CD4-positive, alpha-beta T cell (primary cell): ENCODE measurements at regions of chr12 and their contacts with region 1.

Region 1: DNA sequence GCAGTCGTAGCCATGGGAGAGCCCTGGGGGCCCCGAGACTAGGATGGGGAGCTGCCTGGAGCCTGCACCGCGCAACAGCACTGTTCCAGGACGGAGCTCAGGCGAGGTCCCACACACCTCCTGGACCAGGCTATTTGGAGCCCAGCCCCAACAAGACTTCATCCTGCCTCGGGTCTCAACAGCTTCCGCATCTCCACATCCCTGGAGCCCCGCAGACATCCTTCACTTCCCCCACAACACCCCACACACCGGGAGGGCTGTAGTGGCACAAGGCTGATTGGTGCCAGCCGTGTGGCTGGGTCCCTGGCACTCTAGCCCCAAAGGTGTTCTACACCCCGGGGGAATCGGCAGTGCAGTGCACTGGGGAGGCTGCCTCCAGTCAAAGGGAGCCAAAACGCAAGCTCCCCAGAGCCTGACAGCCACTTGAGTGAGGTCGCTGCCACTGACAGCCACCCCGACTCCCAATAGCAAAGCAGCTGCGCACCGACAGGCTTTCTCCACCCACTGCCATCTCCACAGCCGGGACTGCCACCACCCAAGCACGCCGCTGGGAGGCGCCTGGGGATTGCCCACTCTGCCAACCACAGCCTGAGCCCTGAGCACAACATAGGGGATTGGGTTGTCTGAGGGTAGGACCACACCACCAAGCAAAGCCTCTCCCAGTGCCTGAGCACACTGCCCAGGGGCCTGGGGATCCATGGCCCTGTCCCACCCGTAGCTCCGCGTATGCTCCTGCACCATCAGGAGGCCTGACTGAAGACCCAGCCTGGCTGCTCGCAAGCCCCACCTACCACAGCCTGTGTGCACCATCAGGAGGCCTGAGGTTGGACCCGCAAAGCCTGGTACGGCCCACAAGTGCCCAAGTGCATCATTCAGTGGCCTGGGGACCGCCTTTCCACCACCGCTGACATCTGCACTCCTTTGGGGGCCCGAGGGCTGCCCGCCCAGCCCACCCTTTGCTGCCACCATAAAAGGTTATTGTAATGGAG is 13.2 kb upstream of the KLRF1 start:
- DNase-seq: peak; percentile 88 to 95 (median 92)
- ATAC-seq: peak; percentile 97
- H3K4me3 ChIP-seq: peak overlapping the region; percentile 59
- H3K4me3 Mint-ChIP-seq: peak overlapping the region; percentile 89
- H3K27ac ChIP-seq: peak overlapping the region in 1 of 2 donors; percentile 31
- H3K27ac Mint-ChIP-seq: peak overlapping the region; percentile 92
- H3K4me1 ChIP-seq: peaks cover 12% of the 10 kb centered on the region
- H3K4me1 Mint-ChIP-seq: peaks cover 10% of the 10 kb centered on the region
- H3K27me3 ChIP-seq: peaks cover 0 to 2% of the 10 kb centered on the region in 2 experiments
- H3K27me3 Mint-ChIP-seq: no peaks in the 10 kb centered on the region
- CTCF ChIP-seq: peak; percentile 92

Region 2: DNA sequence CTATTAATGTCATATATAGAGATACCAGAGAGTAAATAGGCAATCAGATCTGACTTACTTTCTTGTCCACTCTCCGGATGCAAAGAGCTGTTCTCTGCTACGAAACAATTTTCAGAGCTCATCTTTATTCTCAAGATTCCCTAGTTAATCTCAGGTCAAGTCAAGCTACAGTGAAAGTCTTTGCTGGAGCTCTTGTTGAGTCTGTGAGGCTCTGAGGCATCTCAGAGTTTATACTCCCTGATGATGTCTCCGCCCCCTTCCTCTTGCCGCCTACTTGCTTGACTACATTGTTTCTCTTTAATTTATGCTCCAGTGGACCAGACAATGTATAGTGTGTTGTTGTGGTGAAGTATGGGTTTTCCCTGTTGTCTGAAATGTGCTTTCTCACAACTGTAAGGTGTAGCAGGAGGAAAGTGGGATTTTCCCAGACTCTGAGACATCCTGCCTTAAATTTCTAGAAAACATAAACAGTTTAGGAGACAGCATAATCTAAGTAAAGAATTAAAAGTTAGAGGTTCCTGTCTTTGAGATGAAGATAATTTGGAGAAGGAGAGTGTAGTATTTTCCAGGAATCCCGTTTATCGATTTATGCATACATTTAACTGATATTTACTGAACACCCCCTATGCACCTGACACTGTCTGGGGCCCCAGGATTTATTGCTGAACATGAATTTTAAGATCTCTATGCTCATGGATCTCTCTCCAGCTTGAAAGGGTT is 53.3 kb before region 1 on chr12 and contains the start of gene CD69:
- CTCF ChIA-PET with region 1: interaction called, 10 read pairs
- POLR2A ChIA-PET with region 1: interaction called, 28 read pairs
- intact Hi-C with region 1: no loop called
- DNase-seq: peak; percentile 56 to 96 (median 69)
- ATAC-seq: peak; percentile 43
- H3K4me3 ChIP-seq: peak within 1 kb of the TSS; percentile 79
- H3K4me3 Mint-ChIP-seq: peak within 1 kb of the TSS; percentile 97
- H3K27ac ChIP-seq: peak within 1 kb of the TSS; percentile 98
- H3K27ac Mint-ChIP-seq: peak within 1 kb of the TSS; percentile 99
- H3K4me1 ChIP-seq: peaks cover 34% of the 10 kb centered on the region
- H3K4me1 Mint-ChIP-seq: peaks cover 68% of the 10 kb centered on the region
- H3K27me3 ChIP-seq: no peaks in the 10 kb centered on the region
- H3K27me3 Mint-ChIP-seq: no peaks in the 10 kb centered on the region
- CTCF ChIP-seq: no peak
- total RNA-seq, gene CD69: 631 to 659 TPM

Region 3: DNA sequence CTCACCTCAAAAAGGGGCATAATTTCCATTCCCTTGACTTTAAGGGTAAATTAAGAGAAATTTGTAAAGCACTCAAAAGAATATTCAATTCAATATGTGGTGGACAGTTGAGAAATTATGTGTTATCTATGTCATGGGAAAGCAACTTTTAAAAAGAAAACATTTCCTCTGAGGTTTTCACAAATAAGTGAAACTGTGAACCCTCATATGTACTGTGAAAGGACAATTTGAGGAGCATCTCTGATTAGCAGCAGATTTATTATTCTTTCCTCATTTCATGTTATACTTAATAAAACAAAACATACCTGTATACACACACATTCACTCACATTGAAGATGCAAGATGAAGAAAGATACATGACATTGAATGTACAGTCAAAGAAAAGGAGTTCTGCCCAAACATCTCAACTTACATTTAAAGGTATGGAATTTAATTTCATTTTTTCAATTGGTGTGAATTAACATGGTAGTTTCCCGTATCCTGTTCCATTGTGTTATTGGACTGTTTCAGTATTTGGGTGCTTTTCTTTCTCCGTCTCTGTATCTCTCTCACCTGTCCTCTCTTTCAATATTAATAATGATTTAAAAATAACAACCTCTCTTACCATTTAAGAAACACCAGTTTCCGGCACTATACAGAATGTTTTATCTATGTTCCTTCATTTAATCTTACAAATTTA is 13.2 kb after region 1 on chr12 and contains the start of gene KLRF1:
- CTCF ChIA-PET with region 1: interaction called, 10 read pairs
- POLR2A ChIA-PET with region 1: no interaction called
- intact Hi-C with region 1: no loop called
- DNase-seq: peak in 1 of 14 experiments; percentile 48
- ATAC-seq: no peak
- H3K4me3 ChIP-seq: no peak within 1 kb of the TSS
- H3K4me3 Mint-ChIP-seq: no peak within 1 kb of the TSS
- H3K27ac ChIP-seq: no peak within 1 kb of the TSS
- H3K27ac Mint-ChIP-seq: no peak within 1 kb of the TSS
- H3K4me1 ChIP-seq: no peaks in the 10 kb centered on the region
- H3K4me1 Mint-ChIP-seq: no peaks in the 10 kb centered on the region
- H3K27me3 ChIP-seq: no peaks in the 10 kb centered on the region
- H3K27me3 Mint-ChIP-seq: no peaks in the 10 kb centered on the region
- CTCF ChIP-seq: no peak
- total RNA-seq, gene KLRF1: 0.44 TPM in 1 of 2 experiments, not detected in the other

Region 4: DNA sequence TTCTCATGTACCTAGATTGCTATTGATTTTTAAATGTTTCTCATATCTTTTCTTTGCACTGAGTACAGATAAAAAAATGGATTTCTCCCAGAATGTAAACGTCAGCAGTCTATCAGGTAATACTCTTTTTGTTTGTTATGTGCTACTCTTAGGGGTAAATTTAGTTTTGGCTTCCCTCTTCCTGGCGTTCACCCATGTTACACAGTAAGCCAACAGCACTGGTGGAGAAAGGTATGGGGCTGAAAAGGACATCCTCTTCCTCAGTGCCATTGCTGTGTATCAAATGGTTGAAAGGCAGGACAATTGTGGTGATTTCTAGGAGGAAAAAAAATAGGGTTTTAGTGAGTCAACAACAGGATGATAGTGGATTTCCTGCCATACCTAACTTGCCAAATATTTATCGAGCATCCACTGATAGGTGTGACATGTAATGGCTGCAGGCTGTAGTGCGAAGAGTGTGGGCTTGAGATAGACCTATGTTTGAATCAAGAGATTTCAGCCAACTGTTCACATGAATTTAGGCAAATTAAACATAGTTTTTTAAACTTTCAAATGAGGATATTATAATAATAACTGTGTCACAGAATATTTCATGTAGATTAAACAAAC is 74.7 kb after region 1 on chr12:
- CTCF ChIA-PET with region 1: no interaction called
- POLR2A ChIA-PET with region 1: no interaction called
- intact Hi-C with region 1: no loop called
- DNase-seq: peak in 1 of 14 experiments; percentile 46
- ATAC-seq: no peak
- H3K4me3 ChIP-seq: no peak overlapping the region
- H3K4me3 Mint-ChIP-seq: no peak overlapping the region
- H3K27ac ChIP-seq: no peak overlapping the region
- H3K27ac Mint-ChIP-seq: no peak overlapping the region
- H3K4me1 ChIP-seq: peaks cover 5% of the 10 kb centered on the region
- H3K4me1 Mint-ChIP-seq: peaks cover 10% of the 10 kb centered on the region
- H3K27me3 ChIP-seq: no peaks in the 10 kb centered on the region
- H3K27me3 Mint-ChIP-seq: no peaks in the 10 kb centered on the region
- CTCF ChIP-seq: no peak

Region 5: GRCh38 chr12:9925708-9926393 is 111.7 kb after region 1 on chr12:
- CTCF ChIA-PET with region 1: interaction called, 9 read pairs
- POLR2A ChIA-PET with region 1: interaction called, 5 read pairs
- intact Hi-C with region 1: loop called (anchors 1 kb)
- DNase-seq: peak in 5 of 14 experiments; percentile 9 to 70 (median 57)
- ATAC-seq: peak; percentile 48
- H3K4me3 ChIP-seq: peak overlapping the region; percentile 21
- H3K4me3 Mint-ChIP-seq: peak overlapping the region; percentile 51
- H3K27ac ChIP-seq: no peak overlapping the region
- H3K27ac Mint-ChIP-seq: no peak overlapping the region
- H3K4me1 ChIP-seq: no peaks in the 10 kb centered on the region
- H3K4me1 Mint-ChIP-seq: peaks cover 9% of the 10 kb centered on the region
- H3K27me3 ChIP-seq: no peaks in the 10 kb centered on the region
- H3K27me3 Mint-ChIP-seq: no peaks in the 10 kb centered on the region
- CTCF ChIP-seq: peak; percentile 75

Region 6: GRCh38 chr12:10190558-10191388 is 376.7 kb after region 1 on chr12:
- CTCF ChIA-PET with region 1: interaction called, 6 read pairs
- POLR2A ChIA-PET with region 1: no interaction called
- intact Hi-C with region 1: loop called (anchors 2 to 5 kb)
- DNase-seq: peak; percentile 23 to 75 (median 40)
- ATAC-seq: peak; percentile 100
- H3K4me3 ChIP-seq: no peak overlapping the region
- H3K4me3 Mint-ChIP-seq: no peak overlapping the region
- H3K27ac ChIP-seq: no peak overlapping the region
- H3K27ac Mint-ChIP-seq: no peak overlapping the region
- H3K4me1 ChIP-seq: no peaks in the 10 kb centered on the region
- H3K4me1 Mint-ChIP-seq: peaks cover 6% of the 10 kb centered on the region
- H3K27me3 ChIP-seq: peaks cover 0 to 6% of the 10 kb centered on the region in 2 experiments
- H3K27me3 Mint-ChIP-seq: peaks cover 25% of the 10 kb centered on the region
- CTCF ChIP-seq: peak; percentile 80